ENCODE measurements at regions of chr16 and their contacts with region 1.

Region 1: DNA sequence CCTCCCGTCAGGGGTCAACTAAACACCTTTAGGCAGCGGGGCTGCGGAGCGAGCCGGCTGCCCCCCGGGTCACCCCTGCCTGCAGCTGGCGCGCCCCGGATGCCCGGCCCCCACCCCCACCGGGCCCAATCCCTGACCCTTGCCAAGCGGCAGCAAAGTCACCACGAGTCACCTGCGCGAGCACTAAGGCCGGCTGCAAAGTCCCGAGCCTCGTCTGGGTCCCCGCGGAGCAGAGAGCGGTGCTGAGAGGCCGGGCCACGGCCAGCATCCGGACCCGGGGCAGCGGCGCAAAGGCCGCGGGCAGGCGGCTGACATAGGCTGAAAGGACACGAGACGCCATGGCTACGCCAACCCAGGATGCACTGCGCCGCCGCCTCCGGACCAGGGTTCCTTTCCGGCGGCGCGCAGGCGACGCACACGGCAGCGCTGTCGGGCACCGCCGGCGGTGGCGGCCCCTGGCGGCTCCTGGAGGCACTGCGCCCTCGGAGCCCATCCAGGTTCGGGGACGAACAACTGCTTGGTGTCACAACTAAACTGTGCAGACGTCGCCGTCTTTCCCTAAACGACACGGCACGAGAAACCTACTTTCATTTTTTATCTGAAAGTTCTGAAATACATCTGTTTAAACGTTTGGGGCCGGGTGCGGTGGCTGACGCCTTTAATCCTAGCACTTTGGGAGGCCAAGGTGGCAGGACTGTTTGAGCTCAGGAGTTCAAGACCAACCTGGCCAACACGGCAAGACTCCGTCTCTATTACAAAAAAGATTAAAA is at the start of gene NDUFAB1:
- DNase-seq: peak; percentile 90
- ATAC-seq: peak; percentile 88
- H3K4me3 Mint-ChIP-seq: peak within 1 kb of the TSS; percentile 84
- H3K27ac Mint-ChIP-seq: peak within 1 kb of the TSS; percentile 91
- H3K4me1 Mint-ChIP-seq: peaks cover 29% of the 10 kb centered on the region
- H3K27me3 Mint-ChIP-seq: no peaks in the 10 kb centered on the region
- CTCF ChIP-seq: peak; percentile 97
- total RNA-seq, gene NDUFAB1: 146 to 189 TPM (median 156 TPM) in 3 replicates

Region 2: GRCh38 chr16:23491490-23492391 is 104.4 kb before region 1 on chr16:
- CTCF ChIA-PET with region 1: no interaction called
- POLR2A ChIA-PET with region 1: no interaction called
- DNase-seq: no peak
- ATAC-seq: no peak
- H3K4me3 Mint-ChIP-seq: no peak overlapping the region
- H3K27ac Mint-ChIP-seq: peak overlapping the region; percentile 84
- H3K4me1 Mint-ChIP-seq: peaks cover 5% of the 10 kb centered on the region; the same call in 1 of the 2 replicates
- H3K27me3 Mint-ChIP-seq: no peaks in the 10 kb centered on the region
- CTCF ChIP-seq: no peak

Region 3: DNA sequence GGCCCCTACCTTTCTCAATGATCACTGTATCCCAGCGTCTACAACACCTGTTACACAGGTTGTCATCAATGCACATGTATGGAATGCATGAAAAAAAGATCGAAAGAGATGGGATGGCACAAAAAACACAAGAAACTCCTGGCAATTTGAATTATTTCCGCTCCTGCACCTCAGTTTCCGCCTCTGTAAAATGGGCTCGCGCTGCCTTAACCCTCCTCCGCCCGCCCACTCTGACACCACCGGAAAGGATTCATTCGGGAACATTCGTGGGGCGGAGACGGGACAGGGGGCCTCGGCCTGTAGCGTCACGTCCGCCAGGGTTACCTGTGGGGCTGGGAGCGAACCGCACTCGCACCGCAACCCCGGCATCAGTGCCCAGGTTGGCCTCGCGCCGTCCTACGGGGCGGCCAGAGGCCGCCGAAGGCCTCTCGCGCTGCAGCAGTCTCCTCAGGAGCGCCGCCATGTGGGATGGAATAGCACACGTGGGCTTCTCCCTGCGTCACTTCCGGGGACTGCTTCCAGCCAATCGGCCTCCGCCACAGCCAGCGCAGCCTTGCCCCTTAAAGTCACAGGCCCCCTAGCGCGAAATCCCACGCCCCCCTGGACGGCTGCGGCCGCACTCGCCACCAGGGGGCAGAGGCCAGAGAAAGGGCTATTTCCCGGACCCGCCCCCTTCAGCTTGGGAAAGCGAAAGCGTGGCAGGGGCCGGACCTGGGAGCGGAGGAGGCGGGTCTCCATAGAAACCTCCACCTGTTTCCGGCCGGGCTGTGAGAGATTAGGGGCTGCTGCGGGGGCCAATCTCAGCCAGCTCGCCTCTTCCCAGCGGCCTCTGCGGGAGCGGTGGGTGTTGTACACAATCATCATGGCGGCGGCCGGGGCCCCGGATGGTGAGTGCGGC is 39.0 kb before region 1 on chr16 and contains the starts of genes EARS2 and UBFD1:
- CTCF ChIA-PET with region 1: interaction called, 22 read pairs
- POLR2A ChIA-PET with region 1: interaction called, 7 read pairs
- DNase-seq: peak; percentile 98
- ATAC-seq: peak; percentile 95
- H3K4me3 Mint-ChIP-seq: peak within 1 kb of the TSS; percentile 90
- H3K27ac Mint-ChIP-seq: peak within 1 kb of the TSS; percentile 85
- H3K4me1 Mint-ChIP-seq: peaks cover 18% of the 10 kb centered on the region
- H3K27me3 Mint-ChIP-seq: no peaks in the 10 kb centered on the region
- CTCF ChIP-seq: peak; percentile 78
- total RNA-seq, gene EARS2: 47.9 to 55.9 TPM (median 53.5 TPM) in 3 replicates
- total RNA-seq, gene UBFD1: 109 to 128 TPM (median 115 TPM) in 3 replicates

Region 4: GRCh38 chr16:23575834-23576233 is 20.3 kb before region 1 on chr16:
- CTCF ChIA-PET with region 1: interaction called, 13 read pairs
- POLR2A ChIA-PET with region 1: no interaction called
- DNase-seq: no peak
- ATAC-seq: peak; percentile 62
- H3K4me3 Mint-ChIP-seq: no peak overlapping the region
- H3K27ac Mint-ChIP-seq: no peak overlapping the region; the same call in 1 of the 2 replicates
- H3K4me1 Mint-ChIP-seq: no peaks in the 10 kb centered on the region
- H3K27me3 Mint-ChIP-seq: no peaks in the 10 kb centered on the region
- CTCF ChIP-seq: no peak

Region 5: GRCh38 chr16:23640931-23641765 is 45.0 kb after region 1 on chr16 and contains the starts of genes DCTN5 and PALB2:
- CTCF ChIA-PET with region 1: interaction called, 10 read pairs
- POLR2A ChIA-PET with region 1: no interaction called
- DNase-seq: peak; percentile 91
- ATAC-seq: peak; percentile 93
- H3K4me3 Mint-ChIP-seq: peak within 1 kb of the TSS; percentile 98
- H3K27ac Mint-ChIP-seq: peak within 1 kb of the TSS; percentile 97
- H3K4me1 Mint-ChIP-seq: peaks cover 13% of the 10 kb centered on the region
- H3K27me3 Mint-ChIP-seq: no peaks in the 10 kb centered on the region; the same call in 1 of the 2 replicates
- CTCF ChIP-seq: no peak
- total RNA-seq, gene DCTN5: 54.0 to 65.8 TPM (median 60.0 TPM) in 3 replicates
- total RNA-seq, gene PALB2: 23.8 to 32.1 TPM (median 25.1 TPM) in 3 replicates

Measured in WTC11 (cell line).